Colonic mucosa (tissue), 4 donors: ENCODE measurements at regions of chr20 and their contacts with region 1.

Region 1: DNA sequence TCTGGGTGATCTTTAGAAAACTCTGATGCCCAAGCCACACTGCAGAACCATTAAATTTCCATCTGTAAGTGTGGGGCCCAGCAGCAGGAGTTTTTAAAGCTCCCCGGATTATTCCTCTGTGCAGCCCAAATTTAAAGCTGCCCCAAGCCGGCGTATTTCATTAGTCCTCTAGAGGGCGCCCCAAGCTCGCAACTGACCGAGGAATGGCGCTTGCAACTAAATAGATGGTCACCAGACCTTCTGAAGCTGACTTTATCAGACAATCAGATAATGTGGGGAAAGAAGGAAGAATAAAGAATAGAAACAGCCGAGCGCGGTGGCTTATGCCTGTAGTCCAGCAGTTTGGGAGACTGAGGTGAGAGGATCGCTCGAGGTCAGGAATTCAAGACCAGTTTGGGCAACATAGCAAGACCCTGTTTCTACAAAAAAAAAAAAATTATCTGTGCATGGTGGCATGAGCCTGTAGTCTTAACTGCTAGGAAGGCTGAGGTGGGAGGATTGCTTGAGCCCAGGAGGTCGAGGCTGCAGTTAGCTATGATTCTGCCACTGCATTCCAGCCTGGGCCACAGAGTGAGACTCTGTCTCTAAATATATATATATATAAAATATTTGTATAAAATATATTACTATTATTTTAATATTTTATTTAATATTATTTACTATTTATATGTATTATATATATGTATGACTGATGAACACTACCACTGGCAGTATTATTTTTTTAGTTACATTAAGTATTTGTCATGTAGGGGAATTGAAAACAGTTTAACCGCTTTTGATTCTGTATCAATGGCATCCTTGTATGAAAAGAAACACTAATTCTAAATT is 56.0 kb downstream of the OTOR start:
- DNase-seq: peak; percentile 39
- H3K4me3 ChIP-seq: no peak overlapping the region
- H3K27ac ChIP-seq: no peak overlapping the region
- H3K4me1 ChIP-seq: no peaks in the 10 kb centered on the region
- H3K27me3 ChIP-seq: peaks cover 5% of the 10 kb centered on the region
- CTCF ChIP-seq: peak; percentile 73

Region 2: DNA sequence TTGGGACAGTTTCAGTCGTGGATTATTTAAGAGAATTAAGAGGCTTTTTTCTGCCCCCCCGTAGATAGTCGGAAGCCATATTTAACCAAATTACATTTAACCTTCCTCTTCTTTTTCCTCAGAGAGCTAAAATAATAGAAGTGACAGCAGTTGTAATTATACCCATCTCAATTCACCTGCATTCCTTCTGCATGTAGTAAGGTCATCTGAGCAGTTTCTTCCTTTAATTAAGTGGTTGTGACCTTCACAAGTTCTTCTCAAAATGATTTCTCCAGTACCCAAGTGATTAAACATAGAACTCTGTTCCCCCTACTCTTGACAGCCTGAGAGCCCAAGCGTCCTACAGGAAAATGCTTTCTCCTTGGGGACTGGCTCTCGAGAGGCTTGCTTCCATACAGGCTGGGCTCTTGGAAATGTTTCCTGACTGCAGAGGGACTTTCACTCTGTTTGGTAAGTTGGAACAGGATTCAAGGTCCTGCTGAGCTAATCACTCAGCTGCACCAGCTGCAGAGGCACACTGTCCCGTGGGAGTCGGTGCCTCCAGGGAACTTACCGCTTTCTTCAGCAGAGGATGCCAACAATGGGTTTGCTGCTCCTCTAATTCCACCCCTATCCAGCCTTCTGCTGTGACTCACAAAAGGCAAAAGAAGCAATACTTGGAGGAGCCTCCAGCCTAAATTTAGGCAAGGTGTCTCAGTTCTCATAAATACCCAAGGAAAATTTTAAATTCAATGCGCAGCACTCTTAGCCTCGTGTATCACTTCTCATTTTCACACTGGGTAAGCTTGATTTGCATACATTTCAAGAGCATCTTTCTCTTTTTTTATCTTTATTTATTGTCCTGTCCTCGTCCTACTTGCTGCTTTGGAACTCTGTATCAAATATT is 645.8 kb before region 1 on chr20:
- intact Hi-C with region 1: no loop called
- DNase-seq: no peak
- H3K4me3 ChIP-seq: no peak overlapping the region
- H3K27ac ChIP-seq: no peak overlapping the region
- H3K4me1 ChIP-seq: no peaks in the 10 kb centered on the region
- H3K27me3 ChIP-seq: no peaks in the 10 kb centered on the region
- CTCF ChIP-seq: no peak

Region 3: DNA sequence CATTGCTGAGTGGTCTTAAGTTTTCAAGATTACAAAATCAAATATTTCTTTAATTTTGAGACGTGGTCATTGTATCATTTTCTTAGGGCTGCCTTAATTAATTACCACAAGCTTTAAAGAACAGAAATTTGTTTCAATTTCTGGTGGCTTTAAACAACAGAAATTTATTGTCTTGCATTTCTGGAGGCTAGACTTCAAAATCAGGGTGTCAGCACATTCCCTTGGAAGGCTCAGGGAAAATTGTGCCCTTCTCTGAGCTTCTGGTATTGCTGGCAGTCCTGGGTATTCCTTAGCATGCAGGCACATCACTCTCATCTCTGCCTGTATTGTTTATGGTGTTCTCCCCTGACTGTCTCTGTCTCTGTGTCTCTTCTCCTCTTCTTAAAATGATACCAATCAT is 346.7 kb after region 1 on chr20:
- intact Hi-C with region 1: no loop called
- DNase-seq: no peak
- H3K4me3 ChIP-seq: no peak overlapping the region
- H3K27ac ChIP-seq: no peak overlapping the region
- H3K4me1 ChIP-seq: no peaks in the 10 kb centered on the region
- H3K27me3 ChIP-seq: no peaks in the 10 kb centered on the region
- CTCF ChIP-seq: no peak

Region 4: DNA sequence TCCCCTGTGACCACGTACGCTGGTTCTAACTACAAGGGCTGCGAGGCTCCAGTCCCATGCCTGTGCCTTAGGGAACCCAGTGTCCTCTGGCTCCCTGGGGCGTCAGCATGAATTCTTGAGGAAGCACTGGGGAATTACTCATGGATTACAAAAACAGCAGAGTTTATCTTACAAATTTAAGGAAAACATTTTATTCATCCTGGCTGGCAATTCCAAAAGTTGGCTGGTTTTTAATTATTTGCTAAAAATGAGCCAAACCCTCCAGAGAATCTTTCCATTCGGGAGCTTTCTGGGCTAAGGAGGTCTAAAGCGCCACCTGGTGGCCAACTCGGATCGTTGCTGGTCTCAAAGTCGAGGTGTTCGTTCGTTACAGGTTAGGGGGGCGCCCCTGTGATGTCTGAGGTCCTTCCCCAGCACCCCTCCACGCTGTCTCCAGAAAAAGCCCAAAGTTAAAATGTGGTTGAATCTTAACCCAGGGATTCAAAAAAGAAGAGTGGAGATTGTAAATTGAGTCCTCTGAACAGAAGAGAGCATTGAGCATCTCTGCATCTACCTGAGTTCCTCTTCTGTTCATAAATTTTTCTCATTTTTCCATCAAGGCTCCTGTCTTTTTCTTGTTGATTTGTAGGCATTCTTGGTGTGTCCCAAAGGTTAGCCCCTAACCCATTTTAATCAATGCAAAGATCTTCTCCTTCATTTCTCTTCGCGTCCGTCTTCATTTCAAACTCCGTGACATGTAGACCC is 627.6 kb after region 1 on chr20:
- intact Hi-C with region 1: loop called (anchors 2 kb)
- DNase-seq: peak; percentile 39
- H3K4me3 ChIP-seq: no peak overlapping the region
- H3K27ac ChIP-seq: no peak overlapping the region
- H3K4me1 ChIP-seq: no peaks in the 10 kb centered on the region
- H3K27me3 ChIP-seq: no peaks in the 10 kb centered on the region
- CTCF ChIP-seq: peak; percentile 90